Activated T-helper 2 cell treated with anti-CD3 and anti-CD28 coated beads, Interferon-gamma antibody, Interleukin-2, Interleukin-4, amounts not matched to agents 10 μg/mL and 5 μg/mL and 100 μg/mL, durations not matched to agents 14 hours and 24 hours and 36 hours (primary cell): ENCODE measurements at regions of chr19 and their contacts with region 1.

Region 1: GRCh38 chr19:58543826-58544590 is at the start of gene TRIM28:
- DNase-seq: peak; percentile 100
- H3K4me3 Mint-ChIP-seq: peak within 1 kb of the TSS; percentile 91
- H3K27ac Mint-ChIP-seq: peak within 1 kb of the TSS; percentile 94
- H3K4me1 Mint-ChIP-seq: peaks cover 22% of the 10 kb centered on the region
- H3K27me3 Mint-ChIP-seq: peaks cover 20% of the 10 kb centered on the region
- total RNA-seq, gene TRIM28: 658 and 662 TPM in 2 replicates

Region 2: GRCh38 chr19:58372311-58373133 is 171.5 kb before region 1 on chr19:
- intact Hi-C with region 1: no loop called
- DNase-seq: no peak
- H3K4me3 Mint-ChIP-seq: no peak overlapping the region
- H3K27ac Mint-ChIP-seq: no peak overlapping the region
- H3K4me1 Mint-ChIP-seq: no peaks in the 10 kb centered on the region
- H3K27me3 Mint-ChIP-seq: no peaks in the 10 kb centered on the region

Region 3: GRCh38 chr19:58572818-58573657 is 29.0 kb after region 1 on chr19 and contains the start of gene MZF1:
- intact Hi-C with region 1: loop called (anchors 1 kb)
- DNase-seq: peak; percentile 100
- H3K4me3 Mint-ChIP-seq: peak within 1 kb of the TSS; percentile 95
- H3K27ac Mint-ChIP-seq: peak within 1 kb of the TSS; percentile 100
- H3K4me1 Mint-ChIP-seq: peaks cover 21% of the 10 kb centered on the region
- H3K27me3 Mint-ChIP-seq: no peaks in the 10 kb centered on the region
- total RNA-seq, gene MZF1: 18.8 and 19.0 TPM in 2 replicates